SK-N-SH (cell line): ENCODE measurements at regions of chr11 and their contacts with region 1.

Region 1: DNA sequence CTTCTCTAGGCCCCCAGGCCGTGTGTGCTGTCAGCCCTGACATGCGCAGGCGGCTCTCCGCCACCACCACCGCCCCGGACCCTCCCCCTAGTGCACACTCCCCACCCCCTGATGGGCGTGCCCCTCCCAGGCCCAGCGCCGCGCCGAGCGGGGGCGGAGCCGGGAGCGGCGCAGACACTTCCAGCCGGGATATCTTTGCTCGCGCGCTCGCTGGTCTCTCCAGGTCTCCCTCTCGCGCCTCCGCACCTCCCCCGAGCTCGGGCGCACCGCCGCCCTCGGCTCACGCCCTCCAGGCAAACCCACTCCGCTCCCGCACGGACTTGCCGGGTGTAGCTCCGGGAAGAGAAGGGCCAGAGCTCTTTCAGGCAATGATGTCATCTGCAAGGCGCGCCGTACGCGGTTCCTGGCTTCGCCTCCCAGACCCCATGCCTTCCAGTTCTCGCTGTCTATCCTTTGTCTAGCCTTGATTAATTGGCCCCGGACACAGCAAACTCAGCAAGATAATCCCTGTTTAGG is at the start of gene SCN3B:
- DNase-seq: peak; percentile 99
- H3K4me3 ChIP-seq: peak within 1 kb of the TSS; percentile 72 to 76
- H3K27ac ChIP-seq: peak within 1 kb of the TSS in 1 of 2 experiments; percentile 90; a peak in 2 of 4 replicates
- H3K4me1 ChIP-seq: peaks cover 0 to 21% of the 10 kb centered on the region in 2 experiments; a peak in 2 of 4 replicates
- H3K27me3 ChIP-seq: peaks cover 15% of the 10 kb centered on the region; the same call in 1 of the 2 replicates
- CTCF ChIP-seq: no peak
- EP300 ChIP-seq: 0 out of 4 replicates have a peak, but pooled peaks of 1 of the 2 experiments have one; percentile 6
- RAD21 ChIP-seq: no peak
- polyA plus RNA-seq, gene SCN3B: 0.23 and 0.44 TPM in 2 replicates

Region 2: DNA sequence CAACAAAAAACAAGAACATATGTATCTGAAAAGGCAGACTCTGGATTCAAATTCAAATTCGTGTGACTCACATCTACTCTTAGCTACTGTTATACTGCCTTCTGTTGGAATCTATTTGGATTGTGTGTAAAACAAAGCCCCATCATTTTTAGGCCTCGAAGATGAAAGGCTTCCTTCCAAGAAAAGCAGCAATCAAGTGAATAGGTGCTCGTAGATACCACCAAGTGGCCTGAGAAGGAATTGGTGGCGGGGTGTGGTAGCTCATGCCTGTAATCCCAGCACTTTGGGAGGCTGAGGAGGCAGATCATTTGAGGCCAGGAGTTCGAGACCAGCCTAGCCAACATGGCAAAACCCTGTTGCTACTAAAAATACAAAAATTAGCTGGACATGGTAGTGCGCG is 220.4 kb before region 1 on chr11:
- CTCF ChIA-PET with region 1: no interaction called
- POLR2A ChIA-PET with region 1: no interaction called
- DNase-seq: peak; percentile 30
- H3K4me3 ChIP-seq: no peak overlapping the region
- H3K27ac ChIP-seq: no peak overlapping the region
- H3K4me1 ChIP-seq: peaks cover 18 to 33% of the 10 kb centered on the region in 2 experiments; a peak in 3 of 4 replicates
- H3K27me3 ChIP-seq: no peaks in the 10 kb centered on the region
- CTCF ChIP-seq: peak; percentile 49
- EP300 ChIP-seq: no peak
- RAD21 ChIP-seq: peak; percentile 28; the same call in 1 of the 2 replicates

Region 3: DNA sequence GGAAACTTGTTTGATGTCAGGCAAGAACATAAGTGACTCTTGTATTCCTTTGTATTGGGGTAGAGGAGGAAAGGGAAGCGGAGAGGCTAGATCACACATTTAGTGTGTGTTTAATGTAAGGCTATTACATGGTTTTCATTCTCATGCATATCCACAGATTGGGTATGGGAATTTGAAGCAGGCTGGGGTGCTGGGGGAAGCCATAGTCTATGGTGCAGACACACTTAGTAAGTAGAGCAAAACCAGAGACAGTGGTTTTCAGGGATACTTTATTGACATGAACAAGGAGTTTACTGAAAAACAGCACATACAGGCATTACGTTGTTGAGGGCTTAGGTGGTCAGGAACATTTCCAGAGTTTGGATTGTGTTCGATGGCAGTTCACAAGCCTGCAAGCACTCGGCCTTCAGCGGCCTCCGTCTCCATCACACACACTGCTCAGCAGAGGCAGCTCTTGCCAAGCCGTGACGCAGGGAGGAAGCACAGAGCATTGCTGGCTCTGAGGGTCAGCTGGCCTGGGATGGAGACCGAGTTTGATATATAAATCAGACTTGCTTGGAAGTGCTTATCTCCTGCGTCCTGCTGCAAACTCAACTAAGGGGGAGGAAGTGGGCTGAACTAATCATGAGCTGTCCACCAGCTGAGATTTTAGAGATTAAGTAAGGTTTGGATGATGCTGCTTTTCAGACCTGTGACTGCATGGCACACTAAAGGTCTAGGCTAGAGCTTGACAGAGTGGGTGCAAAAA is 25.5 kb before region 1 on chr11:
- CTCF ChIA-PET with region 1: interaction called, 12 read pairs
- POLR2A ChIA-PET with region 1: no interaction called
- DNase-seq: peak; percentile 74
- H3K4me3 ChIP-seq: no peak overlapping the region
- H3K27ac ChIP-seq: peak overlapping the region; percentile 43 to 85; a peak in 3 of 4 replicates
- H3K4me1 ChIP-seq: peaks cover 4 to 12% of the 10 kb centered on the region in 2 experiments; a peak in 2 of 4 replicates
- H3K27me3 ChIP-seq: no peaks in the 10 kb centered on the region
- CTCF ChIP-seq: no peak
- EP300 ChIP-seq: peak; percentile 23 to 28; a peak in 1 of 4 replicates
- RAD21 ChIP-seq: peak; percentile 21

Region 4: DNA sequence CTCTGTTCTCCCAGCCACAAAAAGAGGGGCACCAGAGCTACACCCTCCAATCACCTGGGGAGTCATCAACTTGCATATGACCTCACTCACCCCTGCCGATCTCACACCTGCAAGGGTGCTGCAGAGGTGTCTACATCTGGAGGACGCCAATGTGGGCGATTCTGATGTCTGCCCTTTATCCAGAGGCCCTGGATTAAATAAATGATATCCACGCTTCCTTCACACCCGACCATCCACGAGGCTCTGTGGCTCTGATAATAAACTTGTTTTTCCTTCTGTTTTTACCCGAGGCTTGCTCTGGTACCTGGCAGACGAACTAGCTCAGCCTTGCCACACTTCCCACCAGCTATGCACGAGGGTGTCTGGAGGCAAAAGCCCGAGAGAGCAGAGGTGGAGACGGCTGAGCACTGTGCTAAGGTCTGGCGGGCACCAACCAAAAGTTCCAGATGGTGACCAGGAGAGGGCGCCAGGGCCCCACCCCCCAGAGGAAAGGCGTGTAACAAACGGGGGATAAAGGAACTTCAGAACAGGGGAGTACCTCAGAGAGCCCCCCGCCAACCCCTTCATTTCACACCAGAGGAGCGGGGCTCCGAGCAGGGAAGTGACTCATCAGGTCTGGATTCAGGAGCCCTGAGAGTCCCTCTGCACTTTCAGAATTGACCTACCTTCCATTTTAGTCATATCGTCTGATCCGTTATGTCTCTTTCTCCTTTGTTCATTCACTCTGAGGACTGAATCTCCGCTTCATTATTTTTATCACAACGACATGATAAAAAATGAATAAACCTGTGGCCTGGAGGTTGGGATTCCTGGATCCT is 13.7 kb before region 1 on chr11:
- CTCF ChIA-PET with region 1: interaction called, 112 read pairs
- POLR2A ChIA-PET with region 1: interaction called, 3 read pairs
- DNase-seq: peak; percentile 81
- H3K4me3 ChIP-seq: no peak overlapping the region
- H3K27ac ChIP-seq: no peak overlapping the region
- H3K4me1 ChIP-seq: peaks cover 0 to 8% of the 10 kb centered on the region in 2 experiments; a peak in 1 of 4 replicates
- H3K27me3 ChIP-seq: peaks cover 6% of the 10 kb centered on the region; the same call in 1 of the 2 replicates
- CTCF ChIP-seq: peak; percentile 85
- EP300 ChIP-seq: no peak
- RAD21 ChIP-seq: peak; percentile 92

Region 5: DNA sequence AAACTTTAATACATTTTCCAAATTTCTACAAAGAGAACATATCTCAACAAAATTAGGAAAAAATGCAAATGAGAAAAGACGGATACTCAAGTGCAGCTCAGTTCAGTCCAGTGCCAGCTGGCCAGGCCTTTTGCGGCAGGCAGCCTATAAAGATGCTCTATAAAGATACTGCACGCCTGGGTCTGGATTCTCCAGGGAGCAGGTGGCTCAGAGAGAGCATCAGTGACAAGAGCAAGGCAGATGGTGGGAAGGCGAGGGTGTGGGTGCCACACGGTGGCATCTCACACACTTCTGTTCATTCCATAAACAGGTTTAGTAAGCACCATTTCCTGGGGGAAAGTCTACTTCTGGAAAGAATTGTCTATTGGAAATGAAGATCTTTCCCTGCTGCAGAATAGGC is 17.9 kb after region 1 on chr11:
- CTCF ChIA-PET with region 1: interaction called, 24 read pairs
- POLR2A ChIA-PET with region 1: interaction called, 7 read pairs
- DNase-seq: peak; percentile 67
- H3K4me3 ChIP-seq: no peak overlapping the region
- H3K27ac ChIP-seq: peak overlapping the region in 1 of 2 experiments; percentile 12; a peak in 1 of 4 replicates
- H3K4me1 ChIP-seq: no peaks in the 10 kb centered on the region; a peak in 1 of 4 replicates
- H3K27me3 ChIP-seq: no peaks in the 10 kb centered on the region
- CTCF ChIP-seq: no peak
- EP300 ChIP-seq: peak in 1 of 2 experiments; percentile 13; a peak in 1 of 4 replicates
- RAD21 ChIP-seq: peak; percentile 39

Region 6: DNA sequence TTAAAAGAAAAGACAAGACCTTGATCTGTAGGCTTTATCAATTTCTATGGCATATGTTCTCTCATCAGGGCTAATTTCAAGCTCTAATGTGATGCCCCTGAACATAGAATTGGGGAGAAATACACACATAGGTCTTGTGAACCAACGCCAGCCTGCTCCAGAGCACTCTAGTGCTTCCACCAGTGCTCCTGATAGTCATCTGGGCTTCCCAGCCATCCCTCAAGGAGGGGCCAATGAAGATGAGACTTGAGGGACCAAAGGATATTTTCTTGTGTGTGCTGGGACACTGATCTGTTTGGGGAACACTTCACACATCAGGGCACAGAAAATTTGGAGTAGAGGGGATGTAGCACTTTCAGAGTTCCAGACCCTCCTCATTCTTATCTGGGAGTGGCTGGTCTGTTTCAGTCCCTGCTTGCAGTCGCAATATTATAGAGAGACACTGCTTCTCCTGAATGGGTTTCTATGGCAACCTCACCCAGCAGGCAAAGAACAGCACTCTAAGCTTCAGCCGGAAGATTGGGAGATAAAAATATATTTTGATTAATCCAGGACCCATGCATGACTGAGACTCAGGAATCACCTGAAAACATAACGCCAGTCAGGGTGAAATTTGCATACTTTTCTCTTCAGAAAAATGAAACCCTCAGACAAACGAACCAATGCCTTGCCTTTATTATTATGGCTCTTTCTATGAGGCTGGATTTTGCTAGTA is 28.2 kb after region 1 on chr11:
- CTCF ChIA-PET with region 1: interaction called, 21 read pairs
- POLR2A ChIA-PET with region 1: interaction called, 13 read pairs
- DNase-seq: peak; percentile 75
- H3K4me3 ChIP-seq: no peak overlapping the region; a peak in 1 of 4 replicates
- H3K27ac ChIP-seq: peak overlapping the region in 1 of 2 experiments; percentile 98; a peak in 2 of 4 replicates
- H3K4me1 ChIP-seq: peaks cover 0 to 17% of the 10 kb centered on the region in 2 experiments; a peak in 2 of 4 replicates
- H3K27me3 ChIP-seq: peaks cover 6% of the 10 kb centered on the region; the same call in 1 of the 2 replicates
- CTCF ChIP-seq: no peak
- EP300 ChIP-seq: peak in 1 of 2 experiments; percentile 52; a peak in 2 of 4 replicates
- RAD21 ChIP-seq: peak; percentile 7; the same call in 1 of the 2 replicates

Region 7: DNA sequence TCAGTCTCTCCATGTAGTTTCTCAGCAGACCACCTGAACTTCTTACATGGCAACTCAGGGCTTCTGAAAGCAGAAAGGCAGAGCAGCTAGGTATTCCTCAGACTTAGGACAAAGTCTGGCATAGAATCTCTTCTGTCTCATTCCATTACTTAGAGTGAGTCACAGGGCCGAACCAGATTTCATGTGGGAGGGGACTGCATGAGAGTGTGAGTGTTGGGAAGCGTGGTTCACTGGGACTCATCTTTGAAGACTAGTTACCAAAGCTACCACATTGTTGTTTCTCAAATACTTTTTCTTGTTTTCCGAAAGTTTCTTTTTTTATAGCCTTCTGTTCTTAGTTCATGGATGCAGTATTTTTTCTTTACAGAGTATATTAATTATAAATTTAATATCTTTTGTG is 35.9 kb after region 1 on chr11:
- CTCF ChIA-PET with region 1: interaction called, 10 read pairs
- POLR2A ChIA-PET with region 1: no interaction called
- DNase-seq: no peak
- H3K4me3 ChIP-seq: no peak overlapping the region
- H3K27ac ChIP-seq: no peak overlapping the region
- H3K4me1 ChIP-seq: no peaks in the 10 kb centered on the region
- H3K27me3 ChIP-seq: peaks cover 9% of the 10 kb centered on the region; the same call in 1 of the 2 replicates
- CTCF ChIP-seq: no peak
- EP300 ChIP-seq: no peak
- RAD21 ChIP-seq: no peak